Gastrocnemius medialis (tissue), 4 donors: ENCODE measurements at regions of chr17 and their contacts with region 1.

Region 1: GRCh38 chr17:2172077-2172851 is 117.4 kb downstream of the HIC1 start:
- DNase-seq: peak; percentile 37 to 56
- ATAC-seq: peak; percentile 51 to 61
- H3K4me3 ChIP-seq: peak overlapping the region in 2 of 4 donors; percentile 21 to 24
- H3K27ac ChIP-seq: peak overlapping the region; percentile 66 to 81 (median 80)
- H3K4me1 ChIP-seq: peaks cover 55 to 57% of the 10 kb centered on the region in 2 donors
- H3K27me3 ChIP-seq: no peaks in the 10 kb centered on the region
- CTCF ChIP-seq: no peak
- POLR2A ChIP-seq: no peak

Region 2: DNA sequence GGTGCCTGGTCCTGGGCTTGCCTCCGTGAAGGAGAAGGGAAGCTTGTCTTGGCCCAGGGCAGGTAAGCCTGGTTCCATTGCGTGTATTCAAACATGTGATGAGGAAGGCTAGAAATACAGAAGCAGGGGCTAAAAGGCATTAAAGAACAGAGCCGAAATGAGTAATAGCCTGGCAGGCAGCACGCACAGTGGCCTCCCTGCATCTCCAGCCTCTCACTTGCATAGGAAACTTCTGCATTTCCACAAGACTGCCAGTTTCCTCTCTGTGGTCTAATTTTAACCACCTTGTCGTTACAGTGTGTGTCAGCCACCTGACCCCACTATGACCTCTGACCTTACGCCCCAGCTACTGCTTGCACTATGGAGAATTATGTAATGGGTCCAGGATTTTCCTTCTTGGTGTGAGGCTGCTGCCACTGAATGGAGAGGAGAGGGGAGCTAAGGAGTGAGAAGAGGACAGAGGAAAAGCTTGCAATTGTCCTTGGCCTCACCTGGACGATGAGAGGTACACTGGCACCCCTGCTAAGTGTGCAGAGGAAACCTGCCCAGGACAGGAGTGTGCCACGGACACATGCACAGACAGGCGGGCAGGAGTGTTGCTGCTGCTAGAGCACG is 84.6 kb before region 1 on chr17:
- in situ Hi-C with region 1: no loop called
- intact Hi-C with region 1: loop called (anchors 10 kb)
- DNase-seq: no peak
- ATAC-seq: no peak
- H3K4me3 ChIP-seq: no peak overlapping the region
- H3K27ac ChIP-seq: peak overlapping the region; percentile 76 to 85 (median 80)
- H3K4me1 ChIP-seq: peaks cover 79% of the 10 kb centered on the region in 2 donors
- H3K27me3 ChIP-seq: no peaks in the 10 kb centered on the region
- CTCF ChIP-seq: no peak
- POLR2A ChIP-seq: no peak

Region 3: DNA sequence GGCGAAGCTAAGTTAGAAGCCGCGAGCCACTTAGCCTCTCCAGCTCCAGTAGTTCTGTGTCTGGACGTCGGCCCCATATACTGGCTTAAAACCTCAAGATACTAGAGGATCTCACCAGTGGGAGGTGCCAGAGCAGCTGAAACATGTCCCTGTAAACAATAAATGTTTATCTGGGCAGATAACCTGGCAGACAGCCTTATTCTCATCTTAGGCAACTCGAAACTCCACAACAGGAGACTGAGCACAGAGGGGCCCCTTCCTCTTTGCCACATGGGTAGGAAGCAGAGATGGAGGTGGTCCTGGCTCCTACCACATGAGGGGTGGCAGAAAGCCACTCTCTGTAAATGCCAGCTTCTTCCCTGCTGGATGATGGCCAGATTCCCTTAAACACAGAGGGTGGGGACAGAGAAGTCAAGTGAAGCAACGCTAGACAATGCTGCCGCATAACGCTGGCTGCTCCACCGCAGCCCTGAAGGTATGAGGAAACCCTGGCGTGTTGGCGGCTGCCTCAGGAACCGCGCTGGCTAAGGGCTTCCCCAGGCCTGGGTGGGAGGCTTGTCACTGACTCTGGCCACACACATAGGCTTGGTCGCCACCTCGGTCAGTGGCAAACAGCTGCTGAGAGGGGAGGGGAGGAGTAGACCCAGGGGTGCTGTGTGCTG is 49.5 kb before region 1 on chr17:
- in situ Hi-C with region 1: no loop called
- intact Hi-C with region 1: loop called (anchors 5 kb)
- DNase-seq: peak; percentile 32 to 63
- ATAC-seq: peak; percentile 68 to 80
- H3K4me3 ChIP-seq: peak overlapping the region; percentile 13 to 24 (median 20)
- H3K27ac ChIP-seq: peak overlapping the region; percentile 67 to 80 (median 71)
- H3K4me1 ChIP-seq: peaks cover 27 to 29% of the 10 kb centered on the region in 2 donors
- H3K27me3 ChIP-seq: no peaks in the 10 kb centered on the region
- CTCF ChIP-seq: peak in 1 of 5 experiments; percentile 22
- POLR2A ChIP-seq: no peak

Region 4: GRCh38 chr17:2190014-2190413 is 17.8 kb after region 1 on chr17:
- in situ Hi-C with region 1: no loop called
- intact Hi-C with region 1: no loop called
- DNase-seq: no peak
- ATAC-seq: no peak
- H3K4me3 ChIP-seq: no peak overlapping the region
- H3K27ac ChIP-seq: peak overlapping the region; percentile 38 to 67 (median 58)
- H3K4me1 ChIP-seq: peaks cover 42 to 43% of the 10 kb centered on the region in 2 donors
- H3K27me3 ChIP-seq: no peaks in the 10 kb centered on the region
- CTCF ChIP-seq: no peak
- POLR2A ChIP-seq: no peak

Region 5: GRCh38 chr17:2215616-2216364 is 43.5 kb after region 1 on chr17:
- in situ Hi-C with region 1: no loop called
- intact Hi-C with region 1: loop called (anchors 2 kb)
- DNase-seq: peak; percentile 68 to 74
- ATAC-seq: peak in 1 of 2 donors; percentile 31
- H3K4me3 ChIP-seq: peak overlapping the region; percentile 12 to 33 (median 18)
- H3K27ac ChIP-seq: peak overlapping the region; percentile 87 to 97 (median 90)
- H3K4me1 ChIP-seq: peaks cover 54 to 58% of the 10 kb centered on the region in 2 donors
- H3K27me3 ChIP-seq: no peaks in the 10 kb centered on the region
- CTCF ChIP-seq: no peak
- POLR2A ChIP-seq: no peak

Region 6: GRCh38 chr17:2232244-2232638 is 60.0 kb after region 1 on chr17:
- in situ Hi-C with region 1: no loop called
- intact Hi-C with region 1: no loop called
- DNase-seq: no peak
- ATAC-seq: no peak
- H3K4me3 ChIP-seq: no peak overlapping the region
- H3K27ac ChIP-seq: peak overlapping the region; percentile 52 to 96 (median 80)
- H3K4me1 ChIP-seq: peaks cover 37 to 65% of the 10 kb centered on the region in 2 donors
- H3K27me3 ChIP-seq: no peaks in the 10 kb centered on the region
- CTCF ChIP-seq: no peak
- POLR2A ChIP-seq: no peak